ENCODE measurements at regions of chr9 and their contacts with region 1.

Region 1: DNA sequence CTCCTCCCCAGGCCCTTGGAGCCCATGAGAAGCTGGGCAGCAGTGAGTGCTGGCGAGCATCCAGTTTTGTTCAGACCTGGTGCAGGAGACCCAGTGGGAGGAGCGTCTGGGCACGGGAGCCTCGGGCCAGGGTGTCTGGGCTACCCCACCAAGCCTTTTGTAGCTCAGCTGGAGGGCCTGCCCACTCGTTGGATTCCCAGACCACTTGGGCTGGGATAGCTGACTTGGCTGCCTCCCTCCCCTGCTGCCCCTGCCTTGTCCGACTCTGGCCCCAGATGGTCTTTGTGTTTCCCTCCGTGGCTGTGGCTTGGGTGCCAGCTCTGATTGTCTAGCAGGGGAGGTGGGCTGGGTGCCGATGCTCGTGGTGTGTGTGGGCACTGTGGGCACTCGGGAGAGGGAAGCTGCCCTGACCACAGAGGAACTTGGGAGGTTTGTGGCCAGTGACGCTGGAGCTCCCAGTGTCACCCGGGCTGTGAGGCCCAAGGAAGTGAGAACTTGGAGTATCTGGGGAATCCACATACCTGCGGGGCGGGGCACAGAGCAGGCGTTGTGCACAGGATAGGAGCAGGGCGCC is 47.3 kb downstream of the WNK2 start:
- DNase-seq: no peak
- H3K4me3 ChIP-seq: no peak overlapping the region
- H3K27ac ChIP-seq: no peak overlapping the region
- H3K4me1 ChIP-seq: no peaks in the 10 kb centered on the region
- H3K27me3 ChIP-seq: no peaks in the 10 kb centered on the region
- CTCF ChIP-seq: no peak

Region 2: GRCh38 chr9:93246111-93246510 is 14.9 kb after region 1 on chr9:
- CTCF ChIA-PET with region 1: no interaction called
- POLR2A ChIA-PET with region 1: interaction called, 12 read pairs
- intact Hi-C with region 1: no loop called
- DNase-seq: no peak
- H3K4me3 ChIP-seq: no peak overlapping the region
- H3K27ac ChIP-seq: no peak overlapping the region
- H3K4me1 ChIP-seq: no peaks in the 10 kb centered on the region
- H3K27me3 ChIP-seq: no peaks in the 10 kb centered on the region
- CTCF ChIP-seq: no peak